Sigmoid colon (tissue), 7 donors: ENCODE measurements at regions of chrX and their contacts with region 1.

Region 1: GRCh38 chrX:49761481-49761880 is 65.7 kb upstream of the PAGE1 start:
- DNase-seq: no peak
- H3K4me3 ChIP-seq: no peak overlapping the region
- H3K27ac ChIP-seq: no peak overlapping the region
- H3K4me1 ChIP-seq: no peaks in the 10 kb centered on the region
- H3K27me3 ChIP-seq: no peaks in the 10 kb centered on the region
- CTCF ChIP-seq: peak in 1 of 4 experiments; percentile 23
- EP300 ChIP-seq: no peak
- POLR2A ChIP-seq: no peak

Region 2: GRCh38 chrX:49079489-49080428 is 681.7 kb before region 1 on chrX and contains the start of gene WDR45:
- intact Hi-C with region 1: no loop called
- DNase-seq: peak; percentile 88
- H3K4me3 ChIP-seq: peak within 1 kb of the TSS; percentile 53 to 69 (median 60)
- H3K27ac ChIP-seq: peak within 1 kb of the TSS; percentile 85 to 93 (median 90)
- H3K4me1 ChIP-seq: peaks cover 0 to 10% (median 7%) of the 10 kb centered on the region in 4 donors
- H3K27me3 ChIP-seq: no peaks in the 10 kb centered on the region
- CTCF ChIP-seq: no peak
- EP300 ChIP-seq: no peak
- POLR2A ChIP-seq: peak; percentile 68 to 76
- total RNA-seq, gene WDR45: 78.5 to 102 (median 93.5) TPM

Region 3: GRCh38 chrX:49838374-49838773 is 76.9 kb after region 1 on chrX:
- intact Hi-C with region 1: loop called (anchors 10 kb)
- DNase-seq: no peak
- H3K4me3 ChIP-seq: no peak overlapping the region
- H3K27ac ChIP-seq: no peak overlapping the region
- H3K4me1 ChIP-seq: no peaks in the 10 kb centered on the region
- H3K27me3 ChIP-seq: no peaks in the 10 kb centered on the region
- CTCF ChIP-seq: peak; percentile 14 to 43 (median 28)
- EP300 ChIP-seq: no peak
- POLR2A ChIP-seq: no peak